CD14-positive monocyte (primary cell): ENCODE measurements at regions of chr5 and their contacts with region 1.

Region 1: GRCh38 chr5:163943546-163943945 is 438.1 kb downstream of the MAT2B start:
- DNase-seq: peak; percentile 79 to 91 (median 79)
- H3K4me3 ChIP-seq: peak overlapping the region in 2 of 3 experiments; percentile 13 to 57
- H3K4me3 Mint-ChIP-seq: peak overlapping the region; percentile 41 to 65
- H3K27ac ChIP-seq: peak overlapping the region in 1 of 2 donors; percentile 83
- H3K27ac Mint-ChIP-seq: peak overlapping the region; percentile 81 to 89 (median 87)
- H3K4me1 ChIP-seq: peaks cover 39 to 58% of the 10 kb centered on the region in 2 donors
- H3K4me1 Mint-ChIP-seq: peaks cover 45% of the 10 kb centered on the region
- H3K27me3 ChIP-seq: no peaks in the 10 kb centered on the region
- H3K27me3 Mint-ChIP-seq: peaks cover 0 to 2% (median 0%) of the 10 kb centered on the region in 3 donors
- CTCF ChIP-seq: no peak

Region 2: DNA sequence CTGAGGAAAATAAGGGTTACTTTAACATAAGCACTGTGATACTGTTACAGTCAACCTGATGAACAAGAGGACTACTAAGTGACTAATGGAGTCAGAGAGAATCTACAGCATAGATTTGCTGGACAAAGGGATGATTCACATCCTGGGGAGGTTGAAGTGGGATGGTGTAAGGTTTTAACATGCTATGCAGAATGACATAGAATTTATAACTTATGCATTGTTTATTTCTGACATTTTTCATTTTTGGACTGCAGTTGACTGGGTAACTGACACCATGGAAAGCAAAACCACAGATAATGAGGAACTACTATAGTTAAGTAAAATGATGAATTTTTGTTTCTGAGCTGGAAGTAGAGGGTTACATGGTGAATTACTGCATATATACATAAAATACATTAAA is 48.9 kb before region 1 on chr5:
- intact Hi-C with region 1: loop called in 1 of 2 experiments (anchors 10 kb)
- DNase-seq: peak; percentile 65 to 81 (median 77)
- H3K4me3 ChIP-seq: no peak overlapping the region
- H3K4me3 Mint-ChIP-seq: no peak overlapping the region
- H3K27ac ChIP-seq: peak overlapping the region in 1 of 2 donors; percentile 64
- H3K27ac Mint-ChIP-seq: peak overlapping the region in 4 of 7 donors; percentile 24 to 71 (median 31)
- H3K4me1 ChIP-seq: peaks cover 9 to 32% of the 10 kb centered on the region in 2 donors
- H3K4me1 Mint-ChIP-seq: peaks cover 35% of the 10 kb centered on the region
- H3K27me3 ChIP-seq: no peaks in the 10 kb centered on the region
- H3K27me3 Mint-ChIP-seq: peaks cover 0 to 2% (median 0%) of the 10 kb centered on the region in 3 donors
- CTCF ChIP-seq: no peak

Region 3: DNA sequence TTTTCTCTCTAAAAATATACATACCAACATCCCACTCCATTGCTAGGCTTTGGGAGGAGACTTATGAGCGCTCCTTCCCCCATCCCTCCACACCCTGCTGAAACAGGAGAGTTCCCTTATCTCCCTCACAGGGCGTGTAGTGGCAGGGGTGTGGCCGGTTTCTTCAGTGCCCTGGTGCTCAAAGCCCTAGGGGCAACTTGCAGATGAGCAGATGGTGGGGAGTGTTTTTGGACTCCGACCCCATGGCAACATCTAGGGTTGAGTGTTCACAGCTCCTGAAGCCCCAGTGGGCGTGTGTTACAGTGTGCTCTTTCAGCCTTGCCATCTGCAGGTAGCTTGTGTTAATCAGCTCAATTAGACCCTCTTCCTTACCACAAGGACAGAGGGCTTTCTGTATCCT is 28.6 kb before region 1 on chr5:
- intact Hi-C with region 1: loop called in 1 of 2 experiments (anchors 5 kb)
- DNase-seq: peak; percentile 27 to 41 (median 33)
- H3K4me3 ChIP-seq: peak overlapping the region in 1 of 3 experiments; percentile 65
- H3K4me3 Mint-ChIP-seq: peak overlapping the region; percentile 57 to 87
- H3K27ac ChIP-seq: peak overlapping the region; percentile 85 to 96
- H3K27ac Mint-ChIP-seq: peak overlapping the region; percentile 98 to 100 (median 99)
- H3K4me1 ChIP-seq: peaks cover 51 to 53% of the 10 kb centered on the region in 2 donors
- H3K4me1 Mint-ChIP-seq: peaks cover 61% of the 10 kb centered on the region
- H3K27me3 ChIP-seq: no peaks in the 10 kb centered on the region
- H3K27me3 Mint-ChIP-seq: peaks cover 0 to 2% (median 0%) of the 10 kb centered on the region in 3 donors
- CTCF ChIP-seq: no peak